Transverse colon (tissue), 4 donors: ENCODE measurements at regions of chr12 and their contacts with region 1.

Region 1: DNA sequence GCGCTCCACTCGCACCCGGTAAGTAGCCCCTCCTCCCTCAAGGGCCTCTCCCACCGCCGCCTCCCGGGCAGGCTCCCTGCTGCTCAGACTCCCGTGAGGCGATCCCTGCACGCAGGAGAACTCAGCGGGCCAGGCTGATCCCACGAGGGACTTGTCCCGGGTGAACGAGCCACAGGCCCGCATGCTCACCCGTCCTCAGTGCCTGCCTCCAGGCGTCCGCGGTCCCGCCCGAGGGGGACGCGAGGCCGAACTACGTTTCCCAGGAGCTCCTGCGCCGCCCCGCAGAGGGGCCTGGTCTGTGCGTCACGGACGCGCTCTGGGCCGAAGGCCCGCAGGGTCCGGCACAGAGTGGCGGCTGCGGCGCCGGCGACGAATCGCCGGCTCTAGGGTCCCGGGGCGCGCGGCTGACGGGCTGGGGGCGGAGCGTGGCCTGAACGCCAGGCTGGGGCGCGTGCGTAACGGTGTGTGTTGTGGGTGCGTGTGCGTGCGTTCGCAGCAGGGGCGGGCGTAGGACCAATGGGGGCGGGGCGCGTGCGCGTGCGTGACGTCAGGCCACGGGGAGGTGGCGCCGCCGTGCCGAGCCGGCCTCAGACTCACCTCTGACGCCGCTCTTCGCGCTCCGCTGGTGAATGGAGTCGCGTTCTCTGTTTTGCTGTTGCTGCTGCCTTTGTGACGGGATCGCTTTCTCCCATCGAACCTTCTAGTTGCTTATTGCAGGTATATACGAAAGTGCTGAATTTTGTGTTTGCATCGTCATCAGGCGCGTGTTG is at the starts of genes ZNF10 and ZNF891:
- DNase-seq: peak; percentile 97
- H3K4me3 ChIP-seq: peak within 1 kb of the TSS; percentile 55 to 94 (median 68)
- H3K27ac ChIP-seq: peak within 1 kb of the TSS; percentile 93 to 95 (median 94)
- H3K4me1 ChIP-seq: peaks cover 0 to 12% (median 4%) of the 10 kb centered on the region in 4 donors
- H3K27me3 ChIP-seq: no peaks in the 10 kb centered on the region
- CTCF ChIP-seq: no peak
- EP300 ChIP-seq: peak; percentile 83
- POLR2A ChIP-seq: peak; percentile 88
- total RNA-seq, gene ZNF10: 2.6 to 13.7 (median 10.7) TPM
- total RNA-seq, gene ZNF891: 1.4 to 3.8 (median 1.9) TPM

Region 2: DNA sequence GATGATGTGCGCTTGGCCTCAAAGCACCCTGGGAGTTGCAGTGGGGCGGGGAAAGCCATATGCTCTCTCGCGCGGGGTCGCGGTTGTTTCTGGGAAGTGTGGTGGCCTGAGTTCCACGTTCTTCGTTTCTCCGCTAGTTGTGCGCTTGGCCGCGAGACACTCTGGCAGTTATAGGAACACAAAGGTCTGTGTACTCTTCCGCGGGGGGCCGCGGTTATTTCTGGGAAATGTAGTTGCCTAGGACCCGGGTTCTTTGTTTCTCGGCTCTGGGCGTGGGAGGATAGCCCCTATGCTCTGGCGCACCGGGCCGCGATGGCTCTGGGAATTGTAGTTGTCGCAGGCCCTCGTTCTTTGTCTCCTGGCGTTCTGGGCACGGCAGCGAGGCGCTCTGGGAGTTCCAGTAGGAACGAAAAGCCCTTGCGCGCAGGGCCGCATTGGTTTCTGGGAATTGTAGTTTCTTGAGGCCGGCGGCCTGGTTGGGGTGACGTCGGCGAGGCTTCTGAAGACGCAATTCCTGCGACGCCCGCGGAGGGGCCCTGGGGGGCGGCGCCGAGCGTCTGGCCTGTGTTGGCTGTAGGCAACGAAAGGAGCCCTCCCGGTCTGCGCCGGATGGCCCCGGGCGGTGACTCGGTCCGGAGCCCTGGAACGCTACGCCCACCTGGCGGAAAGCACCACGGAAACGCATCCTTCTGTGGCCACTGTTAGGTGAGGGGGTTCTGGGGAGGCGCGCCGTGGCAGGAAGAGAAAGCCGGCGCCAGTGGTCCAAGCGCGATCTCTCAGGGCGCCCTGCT is 49.7 kb before region 1 on chr12 and contains the start of gene ZNF140:
- in situ Hi-C with region 1: no loop called
- intact Hi-C with region 1: loop called (anchors 5 kb)
- DNase-seq: peak; percentile 96
- H3K4me3 ChIP-seq: peak within 1 kb of the TSS; percentile 63 to 96 (median 78)
- H3K27ac ChIP-seq: peak within 1 kb of the TSS; percentile 96 to 99 (median 97)
- H3K4me1 ChIP-seq: peaks cover 0 to 12% (median 2%) of the 10 kb centered on the region in 4 donors
- H3K27me3 ChIP-seq: no peaks in the 10 kb centered on the region
- CTCF ChIP-seq: peak; percentile 31 to 64 (median 34)
- EP300 ChIP-seq: peak; percentile 4
- POLR2A ChIP-seq: peak; percentile 69
- total RNA-seq, gene ZNF140: 13.8 to 35.6 (median 14.8) TPM

Region 3: DNA sequence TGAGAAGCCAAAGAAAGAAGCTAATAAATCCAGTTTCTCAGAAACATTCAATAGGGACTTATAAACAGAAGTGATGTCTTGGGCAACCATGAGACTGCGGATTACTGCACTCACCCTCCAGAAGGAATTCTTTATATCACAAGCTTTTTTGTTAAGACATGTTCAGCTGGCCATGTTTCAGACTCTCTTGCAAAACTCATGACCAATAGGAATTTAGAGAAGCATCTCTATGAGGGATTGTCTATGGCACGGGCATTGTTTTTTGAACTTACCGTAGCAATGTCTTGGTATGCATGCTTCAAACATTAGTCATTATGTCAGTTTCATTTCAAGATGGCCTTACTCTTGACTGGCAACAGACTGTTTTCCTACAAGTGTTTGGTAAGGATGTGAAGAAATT is 35.6 kb after region 1 on chr12:
- in situ Hi-C with region 1: no loop called
- intact Hi-C with region 1: no loop called
- DNase-seq: no peak
- H3K4me3 ChIP-seq: no peak overlapping the region
- H3K27ac ChIP-seq: no peak overlapping the region
- H3K4me1 ChIP-seq: no peaks in the 10 kb centered on the region
- H3K27me3 ChIP-seq: no peaks in the 10 kb centered on the region
- CTCF ChIP-seq: no peak
- EP300 ChIP-seq: no peak
- POLR2A ChIP-seq: no peak